ENCODE measurements at regions of chr11 and their contacts with region 1.

Region 1: GRCh38 chr11:62841361-62842184 is 2.2 kb upstream of the WDR74 start:
- DNase-seq: peak; percentile 68 to 95 (median 81)
- ATAC-seq: peak; percentile 42
- H3K4me3 ChIP-seq: peak overlapping the region; percentile 72
- H3K4me3 Mint-ChIP-seq: no peak overlapping the region
- H3K27ac ChIP-seq: peak overlapping the region; percentile 97 to 100
- H3K27ac Mint-ChIP-seq: no peak overlapping the region
- H3K4me1 ChIP-seq: peaks cover 44% of the 10 kb centered on the region
- H3K4me1 Mint-ChIP-seq: peaks cover 22% of the 10 kb centered on the region
- H3K27me3 ChIP-seq: no peaks in the 10 kb centered on the region
- H3K27me3 Mint-ChIP-seq: no peaks in the 10 kb centered on the region
- CTCF ChIP-seq: no peak

Region 2: GRCh38 chr11:62601394-62602140 is 240.0 kb before region 1 on chr11 and contains the start of gene MTA2:
- CTCF ChIA-PET with region 1: no interaction called
- POLR2A ChIA-PET with region 1: interaction called, 23 read pairs
- intact Hi-C with region 1: no loop called
- DNase-seq: peak; percentile 98 to 100 (median 99)
- ATAC-seq: peak; percentile 79
- H3K4me3 ChIP-seq: peak within 1 kb of the TSS; percentile 100
- H3K4me3 Mint-ChIP-seq: peak within 1 kb of the TSS; percentile 94
- H3K27ac ChIP-seq: peak within 1 kb of the TSS; percentile 85 to 94
- H3K27ac Mint-ChIP-seq: peak within 1 kb of the TSS; percentile 93
- H3K4me1 ChIP-seq: peaks cover 46% of the 10 kb centered on the region
- H3K4me1 Mint-ChIP-seq: peaks cover 56% of the 10 kb centered on the region
- H3K27me3 ChIP-seq: no peaks in the 10 kb centered on the region
- H3K27me3 Mint-ChIP-seq: no peaks in the 10 kb centered on the region
- CTCF ChIP-seq: no peak
- total RNA-seq, gene MTA2: 167 to 172 TPM

Region 3: DNA sequence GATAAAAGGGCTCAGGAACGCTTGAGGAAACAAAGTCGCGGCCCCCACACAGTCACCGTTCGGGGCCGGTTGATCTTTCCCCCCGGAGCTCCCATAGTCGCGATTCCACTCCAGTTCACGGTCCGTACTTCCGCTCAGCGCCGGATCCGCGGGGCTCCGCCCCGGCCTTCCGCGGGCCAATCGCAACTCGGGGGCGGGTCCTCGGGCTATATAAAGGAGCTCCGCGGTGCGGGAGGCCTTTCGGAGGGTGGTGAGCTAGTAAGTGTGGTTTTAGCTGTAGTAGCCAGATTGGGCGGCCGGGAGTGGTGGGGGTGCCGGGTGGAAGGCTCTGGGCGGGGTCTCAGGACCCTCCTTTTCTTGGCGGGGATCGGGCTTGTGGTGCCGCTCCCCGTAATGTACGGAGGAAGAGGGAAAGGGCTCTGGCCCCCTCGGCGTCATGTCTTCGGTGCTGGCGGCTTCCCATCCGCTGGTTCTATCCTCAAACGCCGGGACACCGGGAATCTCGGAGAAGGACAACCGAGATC is 176.4 kb before region 1 on chr11 and contains the starts of genes C11orf98 and CSKMT:
- CTCF ChIA-PET with region 1: no interaction called
- POLR2A ChIA-PET with region 1: interaction called, 53 read pairs
- intact Hi-C with region 1: no loop called
- DNase-seq: peak; percentile 92 to 97 (median 94)
- ATAC-seq: peak; percentile 91
- H3K4me3 ChIP-seq: peak within 1 kb of the TSS; percentile 73
- H3K4me3 Mint-ChIP-seq: peak within 1 kb of the TSS; percentile 99
- H3K27ac ChIP-seq: peak within 1 kb of the TSS; percentile 80 to 88
- H3K27ac Mint-ChIP-seq: peak within 1 kb of the TSS; percentile 96
- H3K4me1 ChIP-seq: peaks cover 48% of the 10 kb centered on the region
- H3K4me1 Mint-ChIP-seq: peaks cover 36% of the 10 kb centered on the region
- H3K27me3 ChIP-seq: no peaks in the 10 kb centered on the region
- H3K27me3 Mint-ChIP-seq: no peaks in the 10 kb centered on the region
- CTCF ChIP-seq: no peak
- total RNA-seq, gene C11orf98: 14.3 to 18.5 TPM
- total RNA-seq, gene CSKMT: 17.8 to 18.8 TPM

Region 4: GRCh38 chr11:62726915-62727763 is 114.4 kb before region 1 on chr11 and contains the start of gene HNRNPUL2:
- CTCF ChIA-PET with region 1: no interaction called
- POLR2A ChIA-PET with region 1: interaction called, 179 read pairs
- intact Hi-C with region 1: loop called in 1 of 2 experiments (anchors 5 kb)
- DNase-seq: peak; percentile 96 to 100 (median 98)
- ATAC-seq: peak; percentile 80
- H3K4me3 ChIP-seq: peak within 1 kb of the TSS; percentile 65
- H3K4me3 Mint-ChIP-seq: peak within 1 kb of the TSS; percentile 93
- H3K27ac ChIP-seq: peak within 1 kb of the TSS; percentile 93 to 97
- H3K27ac Mint-ChIP-seq: peak within 1 kb of the TSS; percentile 98
- H3K4me1 ChIP-seq: peaks cover 52% of the 10 kb centered on the region
- H3K4me1 Mint-ChIP-seq: peaks cover 73% of the 10 kb centered on the region
- H3K27me3 ChIP-seq: no peaks in the 10 kb centered on the region
- H3K27me3 Mint-ChIP-seq: no peaks in the 10 kb centered on the region
- CTCF ChIP-seq: no peak
- total RNA-seq, gene HNRNPUL2: 35.2 to 37.6 TPM

Region 5: DNA sequence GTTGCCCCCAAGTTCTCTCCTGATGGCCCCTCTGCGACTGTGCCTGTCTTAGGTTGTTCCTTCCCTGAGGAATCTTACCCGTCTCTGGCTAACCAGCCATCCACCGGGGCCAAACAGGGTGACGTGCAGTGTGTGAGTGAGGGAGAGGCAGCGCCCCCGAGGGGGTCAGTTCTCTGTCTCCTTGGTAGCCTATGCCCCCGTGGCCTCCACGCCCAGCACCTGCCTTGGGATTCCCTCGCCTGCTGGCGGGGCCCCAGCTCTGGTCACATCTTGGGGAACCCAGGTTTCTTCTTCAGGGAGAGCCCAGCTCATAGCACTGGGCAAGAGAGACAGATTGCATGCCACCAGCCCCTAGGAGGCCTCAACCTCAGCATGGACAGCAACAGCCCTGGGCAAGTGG is 42.1 kb before region 1 on chr11:
- CTCF ChIA-PET with region 1: interaction called, 3 read pairs
- POLR2A ChIA-PET with region 1: interaction called, 96 read pairs
- intact Hi-C with region 1: no loop called
- DNase-seq: no peak
- ATAC-seq: no peak
- H3K4me3 ChIP-seq: no peak overlapping the region
- H3K4me3 Mint-ChIP-seq: no peak overlapping the region
- H3K27ac ChIP-seq: no peak overlapping the region
- H3K27ac Mint-ChIP-seq: no peak overlapping the region
- H3K4me1 ChIP-seq: peaks cover 24% of the 10 kb centered on the region
- H3K4me1 Mint-ChIP-seq: peaks cover 22% of the 10 kb centered on the region
- H3K27me3 ChIP-seq: no peaks in the 10 kb centered on the region
- H3K27me3 Mint-ChIP-seq: no peaks in the 10 kb centered on the region
- CTCF ChIP-seq: no peak

Region 6: DNA sequence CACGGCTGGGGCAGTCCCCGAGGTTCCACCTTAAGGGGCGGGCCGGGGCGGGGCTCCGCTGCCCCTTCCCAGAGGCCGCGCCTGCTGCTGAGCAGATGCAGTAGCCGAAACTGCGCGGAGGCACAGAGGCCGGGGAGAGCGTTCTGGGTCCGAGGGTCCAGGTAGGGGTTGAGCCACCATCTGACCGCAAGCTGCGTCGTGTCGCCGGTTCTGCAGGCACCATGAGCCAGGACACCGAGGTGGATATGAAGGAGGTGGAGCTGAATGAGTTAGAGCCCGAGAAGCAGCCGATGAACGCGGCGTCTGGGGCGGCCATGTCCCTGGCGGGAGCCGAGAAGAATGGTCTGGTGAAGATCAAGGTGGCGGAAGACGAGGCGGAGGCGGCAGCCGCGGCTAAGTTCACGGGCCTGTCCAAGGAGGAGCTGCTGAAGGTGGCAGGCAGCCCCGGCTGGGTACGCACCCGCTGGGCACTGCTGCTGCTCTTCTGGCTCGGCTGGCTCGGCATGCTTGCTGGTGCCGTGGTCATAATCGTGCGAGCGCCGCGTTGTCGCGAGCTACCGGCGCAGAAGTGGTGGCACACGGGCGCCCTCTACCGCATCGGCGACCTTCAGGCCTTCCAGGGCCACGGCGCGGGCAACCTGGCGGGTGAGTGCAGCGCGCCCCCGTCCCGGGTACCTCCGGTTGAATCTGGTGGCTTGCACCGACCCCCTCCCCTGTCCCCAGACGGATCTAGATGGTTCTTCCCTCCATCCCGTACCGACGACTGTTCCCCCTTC is 39.4 kb after region 1 on chr11 and contains the start of gene SLC3A2:
- CTCF ChIA-PET with region 1: interaction called, 13 read pairs
- POLR2A ChIA-PET with region 1: interaction called, 95 read pairs
- intact Hi-C with region 1: loop called in 1 of 2 experiments (anchors 2 kb)
- DNase-seq: peak; percentile 61 to 94 (median 82)
- ATAC-seq: peak; percentile 74
- H3K4me3 ChIP-seq: peak within 1 kb of the TSS; percentile 99
- H3K4me3 Mint-ChIP-seq: peak within 1 kb of the TSS; percentile 93
- H3K27ac ChIP-seq: peak within 1 kb of the TSS; percentile 95 to 98
- H3K27ac Mint-ChIP-seq: peak within 1 kb of the TSS; percentile 100
- H3K4me1 ChIP-seq: peaks cover 47% of the 10 kb centered on the region
- H3K4me1 Mint-ChIP-seq: peaks cover 52% of the 10 kb centered on the region
- H3K27me3 ChIP-seq: no peaks in the 10 kb centered on the region
- H3K27me3 Mint-ChIP-seq: no peaks in the 10 kb centered on the region
- CTCF ChIP-seq: peak; percentile 86
- total RNA-seq, gene SLC3A2: 231 to 234 TPM